Activated T-helper 1 cell treated with anti-CD3 and anti-CD28 coated beads, Interleukin-12 subunit alpha, Interleukin-12 subunit beta, Interleukin-2, Interleukin-4 antibody, amounts not matched to agents 30 ng/mL and 10 ng/mL and 1 ng/mL, durations not matched to agents 14 hours and 24 hours and 36 hours (primary cell): ENCODE measurements at regions of chr11 and their contacts with region 1.

Region 1: DNA sequence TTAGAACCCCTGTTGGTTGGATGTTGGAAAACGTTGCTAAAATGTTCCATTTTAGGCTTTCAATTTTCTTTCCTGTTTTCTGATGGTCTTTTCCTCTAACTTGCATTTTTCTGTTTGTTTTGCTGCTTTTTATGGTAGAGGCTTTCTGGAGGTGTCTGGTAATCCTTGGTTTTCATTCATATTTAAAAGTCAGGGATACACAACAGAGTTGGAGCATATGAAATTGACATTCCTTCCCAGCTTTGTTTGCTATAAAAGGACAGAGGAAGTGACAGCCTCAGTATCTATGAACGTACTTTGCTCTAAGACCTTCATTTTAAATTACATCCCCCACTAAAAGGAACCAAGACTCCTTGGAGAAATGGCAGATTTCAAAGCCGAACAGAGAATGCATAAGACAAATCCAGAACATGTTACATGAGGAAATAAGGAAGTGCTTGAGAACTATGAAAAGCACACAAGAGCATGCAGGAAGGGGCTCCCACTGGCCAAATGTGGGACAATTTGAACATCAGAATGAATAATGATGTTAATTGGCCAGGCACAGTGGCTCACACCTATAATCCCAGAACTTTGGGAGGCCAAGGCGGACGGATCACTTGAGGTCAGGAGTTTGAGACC is 56.7 kb downstream of the PPP6R3 start:
- DNase-seq: no peak
- H3K4me3 Mint-ChIP-seq: no peak overlapping the region
- H3K27ac Mint-ChIP-seq: no peak overlapping the region
- H3K4me1 Mint-ChIP-seq: peaks cover 26% of the 10 kb centered on the region
- H3K27me3 Mint-ChIP-seq: no peaks in the 10 kb centered on the region

Region 2: GRCh38 chr11:68541991-68542390 is 24.8 kb after region 1 on chr11:
- intact Hi-C with region 1: no loop called
- DNase-seq: no peak
- H3K4me3 Mint-ChIP-seq: no peak overlapping the region
- H3K27ac Mint-ChIP-seq: peak overlapping the region; percentile 81
- H3K4me1 Mint-ChIP-seq: peaks cover 51% of the 10 kb centered on the region
- H3K27me3 Mint-ChIP-seq: no peaks in the 10 kb centered on the region

Region 3: GRCh38 chr11:68643585-68643984 is 126.4 kb after region 1 on chr11:
- intact Hi-C with region 1: loop called (anchors 5 kb)
- DNase-seq: no peak
- H3K4me3 Mint-ChIP-seq: no peak overlapping the region
- H3K27ac Mint-ChIP-seq: no peak overlapping the region
- H3K4me1 Mint-ChIP-seq: no peaks in the 10 kb centered on the region
- H3K27me3 Mint-ChIP-seq: peaks cover 9% of the 10 kb centered on the region

Region 4: DNA sequence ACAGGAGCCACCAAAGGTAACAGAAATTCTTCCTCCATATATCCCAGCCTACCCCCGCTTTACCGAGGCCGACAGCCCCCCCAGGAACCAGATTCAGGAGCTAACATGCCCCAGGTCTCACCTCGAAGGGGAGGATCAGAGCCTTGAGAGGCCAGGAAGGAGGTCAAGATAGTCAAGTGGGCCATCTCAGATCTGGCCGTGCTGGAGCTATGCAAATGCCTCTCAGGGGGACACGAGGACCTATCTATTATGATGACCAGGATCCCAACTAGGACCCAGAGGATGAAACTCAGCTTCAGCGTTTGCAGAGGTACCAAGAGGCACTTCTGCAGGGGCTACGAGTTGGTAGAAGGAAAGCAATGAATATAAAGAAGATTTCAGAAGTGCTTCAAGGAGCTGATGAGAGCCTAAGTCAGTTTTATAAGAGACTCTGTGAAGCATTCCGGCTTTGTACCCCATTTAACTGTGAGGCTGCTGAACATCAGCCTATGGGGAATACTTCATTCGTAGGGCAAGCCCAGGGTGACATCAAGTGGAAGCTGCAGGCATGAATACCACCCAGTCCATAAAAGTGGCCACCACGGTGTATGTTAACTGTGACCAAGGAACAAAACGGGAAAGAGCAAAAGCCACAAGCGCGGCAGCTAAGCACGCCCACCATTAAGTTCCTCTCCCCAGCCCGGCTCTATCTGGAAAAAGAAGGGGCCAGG is 352.2 kb after region 1 on chr11:
- intact Hi-C with region 1: no loop called
- DNase-seq: no peak
- H3K4me3 Mint-ChIP-seq: peak overlapping the region; percentile 68
- H3K27ac Mint-ChIP-seq: no peak overlapping the region
- H3K4me1 Mint-ChIP-seq: peaks cover 10% of the 10 kb centered on the region
- H3K27me3 Mint-ChIP-seq: peaks cover 28% of the 10 kb centered on the region